Ovary (tissue), 10 donors: ENCODE measurements at regions of chr10 and their contacts with region 1.

Region 1: DNA sequence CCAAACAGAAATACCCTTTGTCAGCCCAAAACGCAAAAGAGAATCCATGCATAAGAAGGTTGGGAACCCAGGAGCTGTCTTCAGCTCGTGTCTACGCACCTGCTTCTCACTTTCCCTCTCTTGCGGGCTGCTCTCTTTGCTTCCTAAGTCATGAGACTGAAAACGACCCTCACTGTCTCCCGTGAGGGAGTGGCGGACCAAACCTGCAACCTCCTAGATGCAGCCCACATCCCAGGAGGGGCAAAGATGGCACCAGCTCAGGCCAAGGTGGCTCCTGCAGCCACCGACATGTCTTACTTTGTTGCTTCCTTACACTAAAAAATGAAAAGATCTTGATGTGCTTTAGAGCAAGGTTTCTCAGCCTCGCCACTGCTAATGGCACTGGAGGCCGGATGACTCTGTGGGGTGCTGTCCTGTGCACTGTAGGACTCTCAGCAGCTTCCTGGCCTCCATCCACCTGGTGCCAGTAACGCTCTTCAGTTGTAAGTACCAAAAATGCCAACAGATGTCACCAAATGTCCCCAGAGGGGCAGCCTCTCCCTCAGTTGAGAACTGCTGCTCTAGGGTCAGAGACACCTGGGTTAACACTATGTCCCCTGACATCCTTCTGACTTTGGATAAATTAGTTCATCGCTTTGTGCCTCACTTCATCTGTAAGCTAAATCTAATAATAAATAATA is 179.8 kb upstream of the PFKP start:
- DNase-seq: no peak
- H3K4me3 ChIP-seq: no peak overlapping the region
- H3K27ac ChIP-seq: no peak overlapping the region
- H3K4me1 ChIP-seq: no peaks in the 10 kb centered on the region
- H3K27me3 ChIP-seq: no peaks in the 10 kb centered on the region
- CTCF ChIP-seq: no peak
- EP300 ChIP-seq: no peak
- POLR2A ChIP-seq: no peak

Region 2: DNA sequence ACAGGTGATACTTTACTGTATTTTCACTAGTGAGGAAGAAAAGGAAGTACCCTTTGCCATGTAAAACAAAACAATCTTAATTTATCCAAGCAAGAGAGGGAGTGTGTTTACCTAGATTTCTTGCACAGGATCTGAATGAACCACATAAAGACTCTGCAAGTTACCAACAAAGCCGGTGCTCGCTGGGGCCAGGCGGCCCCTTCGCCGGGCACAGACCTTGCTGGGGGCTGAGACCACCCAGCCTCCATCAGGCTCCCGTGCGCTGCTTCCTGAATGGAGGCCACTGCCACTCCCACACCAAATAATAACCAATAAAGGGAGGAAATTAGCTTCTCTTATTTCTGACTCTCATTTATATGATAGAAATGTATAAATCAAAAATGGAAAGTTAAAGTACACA is 525.2 kb before region 1 on chr10:
- intact Hi-C with region 1: loop called in 1 of 4 experiments (anchors 2 kb)
- DNase-seq: no peak
- H3K4me3 ChIP-seq: no peak overlapping the region
- H3K27ac ChIP-seq: no peak overlapping the region
- H3K4me1 ChIP-seq: no peaks in the 10 kb centered on the region
- H3K27me3 ChIP-seq: no peaks in the 10 kb centered on the region
- CTCF ChIP-seq: no peak
- EP300 ChIP-seq: no peak
- POLR2A ChIP-seq: no peak